HAP-1 (cell line): ENCODE measurements at regions of chr13 and their contacts with region 1.

Region 1: GRCh38 chr13:33723772-33724435 is 94.0 kb upstream of the RFC3 start:
- DNase-seq: peak; percentile 78 to 79
- H3K4me3 ChIP-seq: no peak overlapping the region
- H3K4me1 ChIP-seq: peaks cover 2% of the 10 kb centered on the region; the same call in 1 of the 2 replicates
- H3K27me3 ChIP-seq: no peaks in the 10 kb centered on the region

Region 2: DNA sequence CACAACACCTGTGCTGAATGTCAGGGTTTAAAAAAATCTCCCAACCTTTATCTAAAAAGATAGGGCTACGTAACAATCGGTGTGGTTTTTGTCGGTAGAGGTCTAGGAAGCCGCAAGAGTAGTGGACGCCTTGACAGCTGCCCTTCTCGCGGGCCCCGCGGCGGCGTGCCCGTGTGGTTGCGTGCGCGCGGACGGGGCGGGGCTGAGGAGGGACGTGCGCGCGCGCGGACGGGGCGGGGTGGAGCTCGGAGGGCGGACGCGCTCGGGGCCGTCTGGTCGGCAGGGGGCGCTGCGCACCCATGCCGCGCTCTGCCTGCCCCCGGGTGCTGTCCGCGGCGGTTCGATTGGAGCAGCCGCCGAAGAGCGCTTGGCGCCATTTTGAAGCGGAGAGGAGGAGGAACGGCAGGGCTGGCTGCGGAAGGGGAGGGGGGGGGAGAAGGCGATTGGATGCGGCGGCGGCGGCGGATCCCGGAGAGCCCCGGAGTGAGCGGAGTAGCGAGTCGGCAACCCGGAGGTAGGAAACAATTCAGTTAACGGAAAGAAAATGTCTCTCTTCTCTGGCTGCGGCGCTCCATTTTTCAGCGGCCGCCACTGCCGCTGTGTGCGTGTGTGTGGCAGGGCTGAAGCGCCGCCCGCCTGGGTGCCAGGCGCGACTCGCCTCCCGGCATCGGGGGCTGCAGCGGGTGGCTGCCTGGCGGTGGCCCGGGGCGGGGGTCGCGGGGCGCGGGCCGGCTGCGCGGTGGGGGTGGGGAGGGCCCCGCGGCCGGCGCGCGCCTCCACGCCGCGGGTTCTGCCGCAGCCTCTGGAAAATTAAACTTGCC is 1137.6 kb before region 1 on chr13 and contains the start of gene PDS5B:
- in situ Hi-C with region 1: loop called (anchors 25 kb)
- DNase-seq: peak; percentile 89 to 96
- H3K4me3 ChIP-seq: peak within 1 kb of the TSS; percentile 74
- H3K4me1 ChIP-seq: peaks cover 20% of the 10 kb centered on the region
- H3K27me3 ChIP-seq: no peaks in the 10 kb centered on the region

Region 3: DNA sequence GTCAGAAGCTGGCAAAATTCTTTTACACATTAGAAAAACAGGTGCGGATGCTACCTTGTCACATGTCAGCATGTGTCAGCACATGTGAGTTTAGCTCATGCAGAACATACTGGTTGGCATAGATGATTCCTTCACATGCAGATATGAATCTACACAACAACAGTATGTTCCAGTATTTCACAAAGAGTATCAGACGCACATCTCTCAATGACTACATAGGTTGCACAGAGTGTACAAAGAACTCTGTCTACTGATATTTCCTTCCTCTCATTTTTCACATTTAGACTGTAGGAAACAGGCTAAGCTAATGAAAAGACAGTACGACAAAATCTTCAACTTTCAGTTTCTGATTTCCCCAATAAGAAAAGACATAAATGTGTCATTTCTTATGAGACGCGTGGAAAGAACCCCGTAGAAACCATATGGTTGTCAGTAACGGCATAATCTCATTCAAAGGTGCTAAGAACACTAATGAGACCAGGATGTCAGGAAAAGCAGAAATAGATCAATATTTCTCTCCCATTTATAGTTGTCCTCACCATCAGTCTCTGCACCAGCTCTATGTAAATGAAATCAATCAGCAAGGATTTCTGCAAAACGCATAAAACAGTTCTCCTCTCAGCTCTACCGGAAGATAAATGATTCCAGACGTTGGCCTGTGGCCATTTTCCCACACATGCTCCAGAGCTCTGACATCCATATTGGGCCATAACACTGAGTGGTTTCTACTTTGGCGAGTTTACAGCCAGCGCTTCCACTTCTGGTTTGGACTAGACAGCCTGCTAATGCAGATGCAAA is 519.6 kb before region 1 on chr13:
- in situ Hi-C with region 1: loop called (anchors 25 kb)
- DNase-seq: no peak
- H3K4me3 ChIP-seq: no peak overlapping the region
- H3K4me1 ChIP-seq: no peaks in the 10 kb centered on the region
- H3K27me3 ChIP-seq: no peaks in the 10 kb centered on the region